ENCODE measurements at regions of chr4 and their contacts with region 1.

Region 1: DNA sequence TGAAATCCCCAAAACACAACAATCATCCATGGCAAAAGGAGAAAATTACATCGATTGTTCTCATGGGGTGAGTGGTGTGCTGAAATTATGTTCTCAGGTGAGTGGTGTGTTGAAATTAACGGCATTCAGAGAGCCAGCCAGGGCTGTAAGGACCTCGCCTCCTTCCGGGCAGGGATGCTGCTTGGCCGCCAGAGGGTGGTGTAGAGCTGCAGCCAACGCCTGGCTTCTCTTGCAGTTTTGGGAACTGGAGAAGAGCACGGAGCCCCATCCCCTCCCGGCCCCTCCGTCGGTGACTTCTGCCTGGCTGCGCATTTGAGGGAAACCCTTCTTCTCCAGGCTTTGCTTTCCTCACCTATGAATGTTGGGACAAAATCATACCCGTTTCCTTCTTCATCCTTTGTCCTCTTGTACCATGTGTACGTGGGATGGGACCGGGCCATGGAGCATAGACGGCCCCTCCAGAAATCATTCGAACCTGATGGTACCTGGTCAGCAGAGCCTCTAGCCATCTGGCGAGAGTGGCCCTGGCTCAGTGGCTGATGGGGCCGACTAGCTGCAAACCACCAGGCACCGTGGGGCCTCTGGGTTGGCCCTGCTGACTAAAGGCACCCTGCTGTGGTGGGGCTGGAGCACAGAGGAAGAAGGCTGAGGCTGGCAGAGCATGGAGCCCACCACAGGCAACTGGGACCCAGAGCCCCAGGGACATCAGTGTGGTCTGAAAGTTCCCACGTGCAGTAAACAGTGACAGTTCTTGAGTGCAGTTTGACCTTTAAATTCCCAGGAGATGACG is 28.4 kb downstream of the TRMT44 start:
- DNase-seq: peak; percentile 85
- ATAC-seq: peak; percentile 64

Region 2: DNA sequence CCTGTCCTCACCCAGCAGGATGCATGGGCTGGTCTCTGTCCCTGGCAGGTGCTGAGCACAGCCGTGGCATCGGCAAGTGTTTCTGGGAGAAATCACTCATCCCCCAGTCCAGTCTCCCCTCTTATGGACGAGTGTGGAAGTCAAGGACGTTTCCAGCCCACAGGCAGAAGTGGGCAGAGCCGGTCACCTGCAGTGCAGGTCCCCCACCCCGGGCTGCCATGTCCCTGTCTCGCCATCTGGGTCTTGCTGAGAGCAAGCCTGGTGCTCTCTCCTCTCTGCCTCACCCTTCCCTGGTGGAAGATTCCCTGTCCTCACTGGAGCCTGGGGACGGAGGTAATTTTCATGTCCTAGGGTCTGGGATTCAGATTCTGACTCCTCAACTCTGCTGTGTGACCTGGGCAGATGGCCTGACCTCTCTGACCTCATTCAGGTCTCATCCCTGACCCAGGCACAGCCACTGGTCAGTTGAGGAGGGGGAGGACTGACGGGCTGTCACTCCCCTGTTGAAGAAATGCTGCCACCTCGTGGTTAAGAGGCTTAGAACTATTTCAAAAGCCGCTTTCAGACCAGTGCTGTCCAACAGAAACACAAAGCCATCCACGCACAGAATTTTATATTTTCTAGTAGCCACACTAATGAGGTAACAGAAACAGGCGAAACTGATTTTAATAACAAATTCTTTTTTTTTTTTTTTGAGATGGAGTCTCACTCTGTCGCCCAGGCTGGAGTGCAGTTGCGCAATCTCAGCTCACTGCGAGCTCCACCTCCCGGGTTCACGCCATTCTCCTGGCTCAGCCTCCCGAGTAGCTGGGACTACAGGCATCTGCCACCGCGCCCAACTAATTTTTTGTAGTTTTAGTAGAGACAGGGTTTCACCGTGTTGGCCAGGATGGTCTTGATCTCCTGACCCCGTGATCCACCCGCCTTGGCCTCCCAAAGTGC is 125.4 kb after region 1 on chr4:
- intact Hi-C with region 1: loop called (anchors 5 kb)
- DNase-seq: no peak
- ATAC-seq: peak; percentile 69

Measured in sciatic nerve (tissue), 2 donors.